Caco-2 (cell line): ENCODE measurements at regions of chr2 and their contacts with region 1.

Region 1: GRCh38 chr2:156483741-156484176 is 47.6 kb downstream of the GPD2 start:
- DNase-seq: peak; percentile 41 to 63
- H3K4me3 ChIP-seq: no peak overlapping the region
- H3K4me3 Mint-ChIP-seq: peak overlapping the region; percentile 54
- H3K27ac Mint-ChIP-seq: peak overlapping the region; percentile 68
- H3K4me1 ChIP-seq: peaks cover 16% of the 10 kb centered on the region
- H3K4me1 Mint-ChIP-seq: peaks cover 31% of the 10 kb centered on the region
- H3K27me3 ChIP-seq: no peaks in the 10 kb centered on the region
- H3K27me3 Mint-ChIP-seq: no peaks in the 10 kb centered on the region
- CTCF ChIP-seq: no peak

Region 2: GRCh38 chr2:156319811-156320485 is 163.8 kb before region 1 on chr2:
- CTCF ChIA-PET with region 1: no interaction called
- POLR2A ChIA-PET with region 1: no interaction called
- intact Hi-C with region 1: no loop called
- DNase-seq: no peak
- H3K4me3 ChIP-seq: no peak overlapping the region
- H3K4me3 Mint-ChIP-seq: peak overlapping the region; percentile 0
- H3K27ac Mint-ChIP-seq: no peak overlapping the region
- H3K4me1 ChIP-seq: no peaks in the 10 kb centered on the region
- H3K4me1 Mint-ChIP-seq: no peaks in the 10 kb centered on the region
- H3K27me3 ChIP-seq: no peaks in the 10 kb centered on the region
- H3K27me3 Mint-ChIP-seq: peaks cover 3% of the 10 kb centered on the region
- CTCF ChIP-seq: no peak

Region 3: DNA sequence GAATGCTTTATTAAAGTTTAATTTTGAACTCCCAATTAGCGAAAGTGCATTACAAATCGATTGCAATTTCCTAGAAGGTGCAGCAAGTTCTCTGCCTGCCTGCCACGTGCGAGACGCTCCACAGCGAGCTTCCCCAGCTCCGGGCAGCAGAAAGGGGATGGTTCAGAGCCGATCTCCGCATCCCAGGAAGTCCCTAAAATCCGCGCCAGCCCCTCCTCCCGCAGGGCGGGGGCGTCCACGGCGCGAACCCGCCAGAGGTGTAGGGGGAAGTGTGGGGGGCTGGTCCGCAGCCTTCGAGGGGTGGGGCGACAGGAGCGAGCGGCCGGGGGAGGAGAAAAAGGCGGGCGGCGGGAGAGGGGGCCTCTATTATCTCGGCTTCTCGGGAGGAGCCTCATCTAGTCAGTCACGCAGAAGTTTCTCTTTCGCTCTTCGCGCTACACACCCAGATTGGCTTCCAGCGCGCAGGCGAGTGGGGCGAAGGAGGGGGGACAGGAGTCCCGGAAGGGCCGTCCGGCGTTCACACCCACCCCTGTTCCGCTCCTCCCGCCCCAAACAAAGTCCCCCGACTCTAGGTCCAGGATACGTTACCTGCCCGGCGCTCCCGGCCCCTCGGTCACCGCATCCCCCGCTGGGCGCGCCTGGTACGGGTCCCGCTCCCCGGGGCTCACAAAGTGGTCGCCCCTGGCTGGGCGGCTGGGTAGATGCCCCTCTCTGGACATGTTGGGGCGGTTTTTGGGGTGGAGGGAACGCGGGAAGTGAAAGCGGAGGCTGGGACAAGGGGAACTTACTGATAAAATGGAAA is 142.1 kb before region 1 on chr2:
- CTCF ChIA-PET with region 1: no interaction called
- POLR2A ChIA-PET with region 1: no interaction called
- intact Hi-C with region 1: loop called (anchors 5 kb)
- DNase-seq: peak; percentile 83 to 92
- H3K4me3 ChIP-seq: peak overlapping the region; percentile 94
- H3K4me3 Mint-ChIP-seq: peak overlapping the region; percentile 87
- H3K27ac Mint-ChIP-seq: peak overlapping the region; percentile 88
- H3K4me1 ChIP-seq: peaks cover 9% of the 10 kb centered on the region; the same call in 1 of the 2 replicates
- H3K4me1 Mint-ChIP-seq: no peaks in the 10 kb centered on the region
- H3K27me3 ChIP-seq: no peaks in the 10 kb centered on the region
- H3K27me3 Mint-ChIP-seq: no peaks in the 10 kb centered on the region
- CTCF ChIP-seq: no peak

Region 4: GRCh38 chr2:156400706-156401678 is 82.8 kb before region 1 on chr2:
- CTCF ChIA-PET with region 1: no interaction called
- POLR2A ChIA-PET with region 1: no interaction called
- intact Hi-C with region 1: loop called (anchors 1 kb)
- DNase-seq: peak; percentile 63 to 82
- H3K4me3 ChIP-seq: peak overlapping the region; percentile 74
- H3K4me3 Mint-ChIP-seq: peak overlapping the region; percentile 88
- H3K27ac Mint-ChIP-seq: peak overlapping the region; percentile 97
- H3K4me1 ChIP-seq: peaks cover 16% of the 10 kb centered on the region; the same call in 1 of the 2 replicates
- H3K4me1 Mint-ChIP-seq: peaks cover 48% of the 10 kb centered on the region
- H3K27me3 ChIP-seq: no peaks in the 10 kb centered on the region
- H3K27me3 Mint-ChIP-seq: peaks cover 8% of the 10 kb centered on the region
- CTCF ChIP-seq: no peak

Region 5: GRCh38 chr2:156435715-156436496 is 47.9 kb before region 1 on chr2 and contains the start of gene GPD2:
- CTCF ChIA-PET with region 1: no interaction called
- POLR2A ChIA-PET with region 1: no interaction called
- intact Hi-C with region 1: loop called (anchors 2 kb)
- DNase-seq: peak; percentile 93 to 94
- H3K4me3 ChIP-seq: peak within 1 kb of the TSS; percentile 48
- H3K4me3 Mint-ChIP-seq: peak within 1 kb of the TSS; percentile 90
- H3K27ac Mint-ChIP-seq: peak within 1 kb of the TSS; percentile 83
- H3K4me1 ChIP-seq: peaks cover 27% of the 10 kb centered on the region
- H3K4me1 Mint-ChIP-seq: peaks cover 17% of the 10 kb centered on the region
- H3K27me3 ChIP-seq: no peaks in the 10 kb centered on the region
- H3K27me3 Mint-ChIP-seq: no peaks in the 10 kb centered on the region
- CTCF ChIP-seq: peak in 1 of 2 experiments; percentile 36
- total RNA-seq, gene GPD2: 56.8 and 58.3 TPM in 2 replicates

Region 6: GRCh38 chr2:156464106-156464505 is 19.7 kb before region 1 on chr2:
- CTCF ChIA-PET with region 1: no interaction called
- POLR2A ChIA-PET with region 1: no interaction called
- intact Hi-C with region 1: loop called (anchors 1 kb)
- DNase-seq: no peak
- H3K4me3 ChIP-seq: no peak overlapping the region
- H3K4me3 Mint-ChIP-seq: no peak overlapping the region
- H3K27ac Mint-ChIP-seq: no peak overlapping the region
- H3K4me1 ChIP-seq: peaks cover 64% of the 10 kb centered on the region
- H3K4me1 Mint-ChIP-seq: peaks cover 57% of the 10 kb centered on the region
- H3K27me3 ChIP-seq: no peaks in the 10 kb centered on the region
- H3K27me3 Mint-ChIP-seq: no peaks in the 10 kb centered on the region
- CTCF ChIP-seq: no peak